Activated CD8-positive, alpha-beta memory T cell treated with anti-CD3 and anti-CD28 coated beads, Interleukin-2, amount 10 ng/mL, durations not matched to agents 7 days and 5 days (primary cell): ENCODE measurements at regions of chr17 and their contacts with region 1.

Region 1: DNA sequence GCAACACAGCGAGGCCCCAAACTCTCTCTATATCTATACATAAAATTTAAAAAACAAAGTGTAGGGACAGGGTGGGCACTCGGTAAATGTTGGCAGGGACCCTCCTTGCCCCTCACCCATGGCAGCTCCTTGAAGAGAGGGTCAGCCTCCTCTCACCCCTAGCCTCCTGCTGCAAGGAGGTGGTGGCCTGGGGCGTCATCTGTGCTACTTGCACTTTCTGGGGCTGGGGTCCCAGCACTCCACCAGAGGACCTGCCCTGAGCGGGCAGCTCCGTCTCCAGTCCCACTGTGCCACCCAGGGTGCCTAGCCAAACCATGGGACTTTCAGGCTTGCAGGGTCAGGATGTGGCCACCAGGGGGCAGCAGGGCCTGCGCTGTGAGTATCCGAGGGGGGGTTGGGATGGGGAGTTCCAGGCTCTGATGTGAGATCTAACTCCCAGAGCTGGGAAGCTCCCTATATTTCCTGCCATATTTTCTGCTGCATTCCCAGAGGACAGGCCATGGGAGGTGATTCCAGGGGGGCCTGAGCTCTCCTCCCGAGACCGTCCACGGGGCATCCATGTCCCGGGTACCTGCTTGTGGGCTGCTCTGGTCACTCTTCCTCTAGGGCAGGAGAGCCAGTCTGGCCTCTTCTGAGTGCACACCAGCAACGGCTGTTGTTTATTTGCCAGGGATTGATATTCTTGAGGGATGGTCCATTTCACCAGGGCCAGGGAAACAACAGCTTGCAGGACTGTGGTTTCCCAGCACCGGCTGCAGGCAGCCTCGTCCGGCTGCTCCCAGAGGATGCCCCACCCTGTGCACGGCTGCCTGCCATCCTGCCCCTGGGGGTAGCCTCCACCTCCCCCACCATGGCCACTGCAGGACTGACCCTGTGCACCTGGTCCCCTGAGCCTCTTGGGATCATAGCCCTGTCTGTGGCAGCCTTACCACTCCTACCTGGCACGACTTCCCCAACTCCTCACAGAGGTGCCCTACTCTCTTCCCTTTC is 1.1 kb downstream of the GPR142 start:
- DNase-seq: peak; percentile 78
- ATAC-seq: peak; percentile 75
- H3K4me3 Mint-ChIP-seq: no peak overlapping the region
- H3K27ac Mint-ChIP-seq: no peak overlapping the region
- H3K4me1 Mint-ChIP-seq: peaks cover 12% of the 10 kb centered on the region
- H3K27me3 Mint-ChIP-seq: peaks cover under 1% of the 10 kb centered on the region

Region 2: GRCh38 chr17:74274060-74274708 is 94.2 kb before region 1 on chr17 and contains the start of gene DNAI2:
- CTCF ChIA-PET with region 1: no interaction called
- DNase-seq: no peak
- ATAC-seq: peak; percentile 57
- H3K4me3 Mint-ChIP-seq: peak within 1 kb of the TSS; percentile 48
- H3K27ac Mint-ChIP-seq: peak within 1 kb of the TSS; percentile 78
- H3K4me1 Mint-ChIP-seq: peaks cover 22% of the 10 kb centered on the region
- H3K27me3 Mint-ChIP-seq: no peaks in the 10 kb centered on the region
- total RNA-seq, gene DNAI2: 0.35 to 1.3 TPM

Region 3: GRCh38 chr17:74305865-74306654 is 62.3 kb before region 1 on chr17:
- CTCF ChIA-PET with region 1: interaction called, 32 read pairs
- DNase-seq: no peak
- ATAC-seq: peak; percentile 46
- H3K4me3 Mint-ChIP-seq: no peak overlapping the region
- H3K27ac Mint-ChIP-seq: no peak overlapping the region
- H3K4me1 Mint-ChIP-seq: peaks cover 18% of the 10 kb centered on the region
- H3K27me3 Mint-ChIP-seq: peaks cover 4% of the 10 kb centered on the region

Region 4: DNA sequence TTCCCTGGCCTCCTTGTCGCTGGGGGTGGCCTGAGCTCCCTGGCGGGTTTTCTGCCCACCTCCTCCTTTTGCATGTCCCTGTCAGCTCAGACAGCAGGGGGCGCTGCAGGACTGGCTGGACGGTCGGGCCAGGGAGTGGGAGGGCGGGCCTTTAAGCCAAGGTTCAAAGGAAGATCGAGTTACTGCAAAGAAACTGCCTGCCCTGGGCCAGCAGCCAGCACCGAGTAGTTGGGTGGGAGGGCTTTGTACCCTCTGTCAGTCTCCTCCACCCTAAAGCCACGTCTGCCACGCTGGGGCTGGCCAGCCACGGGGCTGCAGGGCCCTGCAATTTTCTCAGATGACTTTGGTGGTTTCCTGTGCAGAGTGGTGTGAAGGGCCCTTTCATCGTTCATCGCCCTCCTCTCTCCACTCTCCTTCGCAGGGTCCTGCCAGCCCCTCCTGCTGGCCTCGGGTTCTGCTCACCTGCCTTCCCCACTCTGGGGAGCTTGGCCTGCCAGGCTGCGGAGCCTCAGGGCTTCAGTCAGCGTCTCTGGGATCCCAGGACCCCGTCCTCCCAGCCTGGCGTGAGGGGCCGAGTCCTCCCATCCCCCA is 11.2 kb after region 1 on chr17:
- CTCF ChIA-PET with region 1: interaction called, 72 read pairs
- DNase-seq: peak; percentile 94
- ATAC-seq: peak; percentile 94
- H3K4me3 Mint-ChIP-seq: no peak overlapping the region
- H3K27ac Mint-ChIP-seq: no peak overlapping the region
- H3K4me1 Mint-ChIP-seq: peaks cover 10% of the 10 kb centered on the region
- H3K27me3 Mint-ChIP-seq: peaks cover 15% of the 10 kb centered on the region

Region 5: GRCh38 chr17:74457146-74457819 is 88.9 kb after region 1 on chr17:
- CTCF ChIA-PET with region 1: interaction called, 109 read pairs
- DNase-seq: peak; percentile 79
- ATAC-seq: peak; percentile 32
- H3K4me3 Mint-ChIP-seq: no peak overlapping the region
- H3K27ac Mint-ChIP-seq: no peak overlapping the region
- H3K4me1 Mint-ChIP-seq: peaks cover 34% of the 10 kb centered on the region
- H3K27me3 Mint-ChIP-seq: peaks cover 12% of the 10 kb centered on the region

Region 6: GRCh38 chr17:74493381-74493833 is 125.0 kb after region 1 on chr17:
- CTCF ChIA-PET with region 1: interaction called, 28 read pairs
- DNase-seq: peak; percentile 76
- ATAC-seq: peak; percentile 78
- H3K4me3 Mint-ChIP-seq: no peak overlapping the region
- H3K27ac Mint-ChIP-seq: no peak overlapping the region
- H3K4me1 Mint-ChIP-seq: peaks cover 22% of the 10 kb centered on the region
- H3K27me3 Mint-ChIP-seq: peaks cover 6% of the 10 kb centered on the region

Region 7: GRCh38 chr17:74532115-74532514 is 163.7 kb after region 1 on chr17:
- CTCF ChIA-PET with region 1: interaction called, 27 read pairs
- DNase-seq: peak; percentile 35
- ATAC-seq: no peak
- H3K4me3 Mint-ChIP-seq: no peak overlapping the region
- H3K27ac Mint-ChIP-seq: no peak overlapping the region
- H3K4me1 Mint-ChIP-seq: peaks cover 3% of the 10 kb centered on the region
- H3K27me3 Mint-ChIP-seq: peaks cover 57% of the 10 kb centered on the region